T-cell (primary cell): ENCODE measurements at regions of chr6 and their contacts with region 1.

Region 1: DNA sequence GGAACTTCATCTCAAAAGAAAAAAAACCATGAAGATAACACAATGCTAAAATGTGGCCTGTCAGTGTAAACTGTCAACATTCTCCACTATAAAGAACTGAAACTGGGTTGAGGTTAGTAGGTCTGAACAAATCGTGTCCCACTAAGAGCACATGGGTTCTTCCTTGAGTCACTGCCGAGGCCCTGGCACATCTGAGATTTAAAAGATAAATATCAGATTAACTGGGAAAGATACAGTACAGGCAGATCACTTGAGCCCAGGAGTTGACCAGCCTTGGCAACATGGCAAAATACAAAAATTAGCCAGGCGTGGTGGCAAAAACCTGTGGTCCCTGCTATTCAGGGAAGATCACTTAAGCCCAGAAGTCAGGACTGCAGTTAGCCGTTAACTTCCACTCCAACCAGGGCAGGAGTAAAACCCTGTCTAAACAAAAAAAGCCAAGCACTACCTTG is 5.6 kb downstream of the EEF1A1 start:
- DNase-seq: peak in 1 of 35 experiments; percentile 40
- ATAC-seq: no peak
- H3K4me3 ChIP-seq: no peak overlapping the region
- H3K4me3 Mint-ChIP-seq: no peak overlapping the region
- H3K27ac ChIP-seq: peak overlapping the region; percentile 62
- H3K27ac Mint-ChIP-seq: peak overlapping the region; percentile 74 to 75
- H3K4me1 ChIP-seq: peaks cover 24 to 46% of the 10 kb centered on the region in 2 experiments
- H3K4me1 Mint-ChIP-seq: peaks cover 55 to 58% (median 57%) of the 10 kb centered on the region in 3 donors
- H3K27me3 ChIP-seq: no peaks in the 10 kb centered on the region
- H3K27me3 Mint-ChIP-seq: no peaks in the 10 kb centered on the region

Region 2: GRCh38 chr6:73074175-73074574 is 441.1 kb before region 1 on chr6:
- CTCF ChIA-PET with region 1: no interaction called
- POLR2A ChIA-PET with region 1: no interaction called
- DNase-seq: no peak
- ATAC-seq: no peak
- H3K4me3 ChIP-seq: no peak overlapping the region
- H3K4me3 Mint-ChIP-seq: no peak overlapping the region
- H3K27ac ChIP-seq: no peak overlapping the region
- H3K27ac Mint-ChIP-seq: no peak overlapping the region
- H3K4me1 ChIP-seq: no peaks in the 10 kb centered on the region
- H3K4me1 Mint-ChIP-seq: no peaks in the 10 kb centered on the region
- H3K27me3 ChIP-seq: no peaks in the 10 kb centered on the region
- H3K27me3 Mint-ChIP-seq: no peaks in the 10 kb centered on the region

Region 3: DNA sequence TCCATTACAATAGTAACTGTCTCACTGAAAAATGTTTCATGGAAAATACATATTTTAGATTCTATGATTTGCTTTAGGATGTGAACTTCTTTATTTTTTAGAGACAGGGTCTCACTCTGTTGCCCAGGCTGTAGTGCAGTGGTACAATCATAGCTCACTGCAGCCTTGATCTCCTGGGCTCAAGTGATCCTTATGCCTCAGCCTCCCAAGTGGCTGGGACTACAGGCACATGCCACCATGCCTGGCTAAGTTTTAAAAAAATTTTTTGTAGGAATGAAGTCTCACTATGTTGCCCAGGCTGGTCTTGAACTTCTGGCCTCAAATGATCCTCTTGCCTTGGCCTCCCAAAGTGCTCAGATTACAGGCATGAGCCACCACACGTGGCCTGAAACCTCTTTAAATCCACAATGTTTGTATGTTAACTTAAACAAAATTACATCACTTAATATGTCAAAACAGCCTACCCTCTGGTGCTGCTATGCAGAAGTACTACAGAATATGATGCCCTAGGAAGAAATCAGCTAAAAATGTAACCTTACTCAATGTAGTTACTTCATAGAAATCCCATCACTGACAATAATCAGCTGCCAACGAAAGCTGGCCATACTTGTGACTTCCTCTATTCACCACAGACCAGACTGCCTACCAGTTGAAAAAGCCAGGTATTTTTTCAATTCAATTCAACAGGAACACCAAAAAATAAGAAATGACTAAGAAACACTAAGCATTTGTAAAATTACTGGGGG is 12.0 kb before region 1 on chr6:
- CTCF ChIA-PET with region 1: interaction called in 1 of 2 experiments, 9 read pairs
- POLR2A ChIA-PET with region 1: interaction called in 1 of 2 experiments, 17 read pairs
- DNase-seq: no peak
- ATAC-seq: no peak
- H3K4me3 ChIP-seq: no peak overlapping the region
- H3K4me3 Mint-ChIP-seq: no peak overlapping the region
- H3K27ac ChIP-seq: peak overlapping the region; percentile 10
- H3K27ac Mint-ChIP-seq: peak overlapping the region; percentile 25 to 54
- H3K4me1 ChIP-seq: no peaks in the 10 kb centered on the region
- H3K4me1 Mint-ChIP-seq: no peaks in the 10 kb centered on the region
- H3K27me3 ChIP-seq: no peaks in the 10 kb centered on the region
- H3K27me3 Mint-ChIP-seq: no peaks in the 10 kb centered on the region

Region 4: GRCh38 chr6:73585566-73586415 is 70.6 kb after region 1 on chr6:
- CTCF ChIA-PET with region 1: interaction called, 5 to 9 read pairs
- POLR2A ChIA-PET with region 1: interaction called, 10 to 12 read pairs
- DNase-seq: peak in 30 of 35 experiments; percentile 6 to 80 (median 22)
- ATAC-seq: peak; percentile 81 to 85 (median 82)
- H3K4me3 ChIP-seq: peak overlapping the region; percentile 6 to 19
- H3K4me3 Mint-ChIP-seq: peak overlapping the region; percentile 79 to 80 (median 79)
- H3K27ac ChIP-seq: peak overlapping the region; percentile 94
- H3K27ac Mint-ChIP-seq: peak overlapping the region; percentile 100
- H3K4me1 ChIP-seq: peaks cover 6 to 18% of the 10 kb centered on the region in 2 experiments
- H3K4me1 Mint-ChIP-seq: peaks cover 27 to 31% (median 28%) of the 10 kb centered on the region in 3 donors
- H3K27me3 ChIP-seq: no peaks in the 10 kb centered on the region
- H3K27me3 Mint-ChIP-seq: no peaks in the 10 kb centered on the region

Region 5: GRCh38 chr6:73610444-73611275 is 95.4 kb after region 1 on chr6:
- CTCF ChIA-PET with region 1: interaction called, 63 to 81 read pairs
- POLR2A ChIA-PET with region 1: interaction called, 5 to 6 read pairs
- DNase-seq: peak in 2 of 35 experiments; percentile 11 to 73
- ATAC-seq: peak; percentile 36 to 69 (median 48)
- H3K4me3 ChIP-seq: no peak overlapping the region
- H3K4me3 Mint-ChIP-seq: no peak overlapping the region
- H3K27ac ChIP-seq: no peak overlapping the region
- H3K27ac Mint-ChIP-seq: peak overlapping the region in 1 of 2 donors; percentile 53
- H3K4me1 ChIP-seq: no peaks in the 10 kb centered on the region
- H3K4me1 Mint-ChIP-seq: peaks cover 4 to 6% (median 4%) of the 10 kb centered on the region in 3 donors
- H3K27me3 ChIP-seq: no peaks in the 10 kb centered on the region
- H3K27me3 Mint-ChIP-seq: no peaks in the 10 kb centered on the region

Region 6: GRCh38 chr6:73653571-73654424 is 138.6 kb after region 1 on chr6 and contains the start of gene SLC17A5:
- CTCF ChIA-PET with region 1: interaction called in 1 of 2 experiments, 24 read pairs
- POLR2A ChIA-PET with region 1: interaction called, 3 to 14 read pairs
- DNase-seq: peak; percentile 78 to 93 (median 86)
- ATAC-seq: peak; percentile 91 to 95 (median 92)
- H3K4me3 ChIP-seq: peak within 1 kb of the TSS; percentile 80 to 98
- H3K4me3 Mint-ChIP-seq: peak within 1 kb of the TSS; percentile 94 to 97 (median 96)
- H3K27ac ChIP-seq: peak within 1 kb of the TSS; percentile 98
- H3K27ac Mint-ChIP-seq: peak within 1 kb of the TSS; percentile 95 to 97
- H3K4me1 ChIP-seq: peaks cover 6 to 17% of the 10 kb centered on the region in 2 experiments
- H3K4me1 Mint-ChIP-seq: peaks cover 34 to 37% (median 34%) of the 10 kb centered on the region in 3 donors
- H3K27me3 ChIP-seq: no peaks in the 10 kb centered on the region
- H3K27me3 Mint-ChIP-seq: no peaks in the 10 kb centered on the region
- total RNA-seq, gene SLC17A5: 6.4 to 15.0 (median 9.4) TPM